K562 (cell line): ENCODE measurements at regions of chr7 and their contacts with region 1.

Region 1: DNA sequence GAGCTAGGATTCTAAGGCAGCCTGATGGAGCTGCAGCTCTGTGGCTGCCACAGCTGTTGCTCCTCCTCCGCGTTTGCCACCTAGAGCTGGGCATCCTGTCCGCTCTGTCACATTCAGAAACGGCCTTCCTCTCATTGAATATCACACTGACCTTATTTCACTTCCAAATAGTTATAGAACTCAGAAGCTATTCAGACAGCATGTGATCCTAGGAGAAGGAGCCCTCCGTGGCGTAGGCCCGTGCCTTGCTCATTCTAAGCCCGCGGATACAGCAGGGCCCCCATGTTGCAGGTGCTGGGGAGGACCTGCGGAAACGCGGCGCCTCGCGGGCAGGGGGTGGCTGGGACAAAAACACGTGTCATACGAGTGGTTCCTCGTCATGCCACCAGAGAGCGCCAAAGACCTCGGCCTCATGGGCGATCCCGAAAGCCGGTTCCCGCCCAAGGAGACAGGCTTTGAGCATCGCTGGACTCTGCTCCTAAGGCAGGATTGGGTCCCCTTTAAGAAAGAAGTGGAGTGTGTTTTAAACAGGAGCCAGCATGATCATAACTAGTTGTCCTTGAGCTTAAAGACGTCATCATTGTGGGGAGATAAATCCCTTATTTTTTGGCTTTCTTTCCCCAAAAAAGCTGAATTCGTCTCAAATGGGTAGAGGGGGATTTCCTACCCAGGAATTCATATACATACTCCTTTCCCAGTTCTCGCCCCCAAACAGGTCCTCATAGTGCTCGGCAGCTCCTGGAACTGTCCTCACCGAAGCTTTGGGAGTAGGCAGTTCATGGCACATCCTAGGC is 17.9 kb upstream of the FIGNL1 start:
- DNase-seq: peak; percentile 79 to 87 (median 86)
- ATAC-seq: peak; percentile 95
- H3K4me3 ChIP-seq: no peak overlapping the region
- H3K27ac ChIP-seq: no peak overlapping the region
- H3K4me1 ChIP-seq: peaks cover 3 to 6% of the 10 kb centered on the region in 2 experiments; a peak in 3 of 5 replicates
- H3K27me3 ChIP-seq: peaks cover 13 to 56% of the 10 kb centered on the region in 2 experiments
- CTCF ChIP-seq: peak; percentile 87 to 92 (median 90)
- EP300 ChIP-seq: no peak
- POLR2A ChIP-seq: no peak
- RAD21 ChIP-seq: peak; percentile 95 to 99

Region 2: DNA sequence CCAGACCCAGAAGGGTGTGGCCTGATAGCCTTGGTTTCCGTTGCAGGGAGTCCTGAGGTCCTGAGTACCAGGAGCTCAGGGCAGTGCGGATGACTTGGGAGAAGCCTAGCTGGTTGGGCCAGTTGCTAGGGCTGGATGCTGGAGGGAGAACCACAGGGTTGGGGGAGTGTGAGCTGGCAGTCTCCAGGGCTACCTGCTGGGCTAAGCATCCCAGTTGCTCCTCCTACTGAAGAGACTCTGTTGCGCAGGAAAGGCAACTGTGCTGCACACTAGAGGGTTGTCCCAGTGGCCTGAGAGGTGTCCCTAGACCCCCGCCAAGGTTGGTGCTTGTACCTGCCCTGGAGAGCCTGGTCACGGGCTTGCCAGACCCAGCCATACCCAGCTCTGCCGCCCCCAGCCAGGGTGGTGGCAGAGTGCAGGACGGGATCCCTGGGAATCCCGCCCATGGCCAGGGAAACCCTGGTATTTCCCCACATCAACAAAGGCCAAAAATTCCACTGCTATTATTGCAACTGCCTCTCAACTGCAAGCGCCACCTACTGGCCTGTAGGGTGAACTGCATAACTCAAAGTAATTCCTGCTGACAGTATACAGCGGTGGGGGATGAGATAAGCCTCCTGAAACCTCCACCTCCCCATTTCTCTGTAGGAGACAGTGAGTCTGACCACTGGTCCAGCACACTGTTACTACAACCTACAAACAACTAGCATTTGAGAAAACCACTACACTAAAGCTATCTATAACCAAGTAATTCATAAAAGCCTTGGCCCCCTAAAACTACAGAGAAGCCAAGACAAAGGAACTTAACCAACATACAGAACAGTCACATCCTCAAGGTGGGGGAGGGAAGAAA is 164.8 kb after region 1 on chr7:
- CTCF ChIA-PET with region 1: interaction called, 10 read pairs
- POLR2A ChIA-PET with region 1: no interaction called
- in situ Hi-C with region 1: no loop called
- intact Hi-C with region 1: loop called (anchors 2 kb)
- DNase-seq: peak; percentile 62 to 78 (median 66)
- ATAC-seq: peak; percentile 95
- H3K4me3 ChIP-seq: no peak overlapping the region
- H3K27ac ChIP-seq: no peak overlapping the region
- H3K4me1 ChIP-seq: peaks cover 5 to 8% of the 10 kb centered on the region in 2 experiments; a peak in 3 of 5 replicates
- H3K27me3 ChIP-seq: no peaks in the 10 kb centered on the region
- CTCF ChIP-seq: peak; percentile 73 to 88 (median 80)
- EP300 ChIP-seq: no peak
- POLR2A ChIP-seq: no peak
- RAD21 ChIP-seq: peak in 1 of 2 experiments; percentile 39; a peak in 2 of 4 replicates

Region 3: GRCh38 chr7:50805447-50806119 is 337.6 kb after region 1 on chr7:
- CTCF ChIA-PET with region 1: no interaction called
- POLR2A ChIA-PET with region 1: no interaction called
- in situ Hi-C with region 1: no loop called
- intact Hi-C with region 1: loop called (anchors 5 kb)
- DNase-seq: peak in 1 of 4 experiments; percentile 4
- ATAC-seq: no peak
- H3K4me3 ChIP-seq: no peak overlapping the region
- H3K27ac ChIP-seq: no peak overlapping the region
- H3K4me1 ChIP-seq: peaks cover 0 to 4% of the 10 kb centered on the region in 2 experiments; a peak in 2 of 5 replicates
- H3K27me3 ChIP-seq: peaks cover 0 to 23% of the 10 kb centered on the region in 2 experiments; a peak in 3 of 5 replicates
- CTCF ChIP-seq: no peak
- EP300 ChIP-seq: no peak
- POLR2A ChIP-seq: no peak
- RAD21 ChIP-seq: no peak

Region 4: GRCh38 chr7:51067757-51068156 is 599.7 kb after region 1 on chr7:
- CTCF ChIA-PET with region 1: interaction called, 9 read pairs
- POLR2A ChIA-PET with region 1: no interaction called
- in situ Hi-C with region 1: no loop called
- intact Hi-C with region 1: loop called (anchors 2 kb)
- DNase-seq: peak; percentile 22 to 63 (median 35)
- ATAC-seq: peak; percentile 81
- H3K4me3 ChIP-seq: no peak overlapping the region
- H3K27ac ChIP-seq: no peak overlapping the region
- H3K4me1 ChIP-seq: no peaks in the 10 kb centered on the region
- H3K27me3 ChIP-seq: peaks cover 0 to 18% of the 10 kb centered on the region in 2 experiments; a peak in 3 of 5 replicates
- CTCF ChIP-seq: peak; percentile 45 to 69 (median 60); a peak in 5 of 6 replicates
- EP300 ChIP-seq: no peak
- POLR2A ChIP-seq: no peak
- RAD21 ChIP-seq: peak; percentile 57 to 71

Region 5: GRCh38 chr7:51162724-51163329 is 694.8 kb after region 1 on chr7:
- CTCF ChIA-PET with region 1: interaction called, 11 read pairs
- POLR2A ChIA-PET with region 1: no interaction called
- in situ Hi-C with region 1: no loop called
- intact Hi-C with region 1: loop called (anchors 5 kb)
- DNase-seq: peak; percentile 39 to 81 (median 60)
- ATAC-seq: peak; percentile 96
- H3K4me3 ChIP-seq: no peak overlapping the region
- H3K27ac ChIP-seq: no peak overlapping the region
- H3K4me1 ChIP-seq: no peaks in the 10 kb centered on the region; a peak in 1 of 5 replicates
- H3K27me3 ChIP-seq: peaks cover 0 to 11% of the 10 kb centered on the region in 2 experiments; a peak in 2 of 5 replicates
- CTCF ChIP-seq: peak; percentile 82 to 86 (median 83)
- EP300 ChIP-seq: no peak
- POLR2A ChIP-seq: no peak
- RAD21 ChIP-seq: peak; percentile 80 to 92